AG04449 (cell line): ENCODE measurements at regions of chr2 and their contacts with region 1.

Region 1: DNA sequence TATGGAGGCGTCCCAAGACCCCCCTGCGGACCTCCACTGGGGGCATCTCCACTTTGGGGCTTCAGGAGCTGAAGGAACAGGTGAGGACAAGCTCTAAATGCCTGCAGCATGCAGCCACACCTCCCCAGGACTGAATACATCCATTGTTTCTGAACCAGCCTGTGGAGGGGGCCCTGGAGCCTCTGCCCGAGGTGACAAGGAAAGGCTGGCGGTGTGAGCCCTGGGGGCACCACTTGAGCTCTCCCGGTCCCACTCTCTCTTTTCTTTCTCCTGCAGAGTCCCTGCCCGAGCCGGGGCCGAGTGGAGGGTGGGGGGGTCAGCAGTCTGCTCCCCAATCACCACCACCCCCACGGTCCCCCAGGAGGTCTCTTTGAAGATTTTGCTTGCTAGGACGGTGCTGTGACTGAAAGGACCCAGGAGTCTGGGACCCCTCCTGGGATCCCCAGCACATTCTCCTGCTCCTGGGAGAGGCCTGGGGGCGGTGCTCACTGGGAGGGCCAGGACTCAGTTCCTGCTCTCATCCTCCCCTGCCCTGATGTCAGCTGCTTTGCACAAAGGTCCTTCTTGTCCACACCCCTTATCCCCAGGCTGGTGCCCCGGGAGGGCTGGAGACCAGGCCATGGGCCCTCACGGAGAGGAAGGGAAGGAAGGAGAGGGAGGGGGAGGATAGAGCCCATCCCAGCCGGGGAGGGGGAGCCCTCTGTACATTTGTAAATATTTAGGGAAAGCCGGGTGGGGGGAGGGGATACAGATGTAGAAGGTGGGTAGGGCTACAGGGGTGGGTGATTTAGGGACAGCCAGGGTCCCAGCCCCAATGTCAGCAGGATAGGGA is 5.7 kb downstream of the CHPF start:
- DNase-seq: no peak
- H3K4me3 ChIP-seq: no peak overlapping the region
- CTCF ChIP-seq: no peak

Region 2: GRCh38 chr2:219279517-219280516 is 258.1 kb before region 1 on chr2:
- CTCF ChIA-PET with region 1: no interaction called
- POLR2A ChIA-PET with region 1: no interaction called
- DNase-seq: peak; percentile 62
- H3K4me3 ChIP-seq: peak overlapping the region; percentile 78
- CTCF ChIP-seq: peak; percentile 2

Region 3: GRCh38 chr2:219509780-219510511 is 27.9 kb before region 1 on chr2:
- CTCF ChIA-PET with region 1: interaction called, 1,084 read pairs
- POLR2A ChIA-PET with region 1: no interaction called
- DNase-seq: no peak
- H3K4me3 ChIP-seq: peak overlapping the region; percentile 45
- CTCF ChIP-seq: peak; percentile 88